Calu3 (cell line): ENCODE measurements at regions of chr3 and their contacts with region 1.

Region 1: GRCh38 chr3:88003115-88003755 is 55.6 kb downstream of the CGGBP1 start:
- DNase-seq: peak; percentile 50
- H3K4me3 Mint-ChIP-seq: no peak overlapping the region
- H3K27ac Mint-ChIP-seq: no peak overlapping the region
- H3K4me1 Mint-ChIP-seq: peaks cover 10% of the 10 kb centered on the region
- H3K27me3 Mint-ChIP-seq: no peaks in the 10 kb centered on the region
- CTCF ChIP-seq: peak; percentile 62

Region 2: DNA sequence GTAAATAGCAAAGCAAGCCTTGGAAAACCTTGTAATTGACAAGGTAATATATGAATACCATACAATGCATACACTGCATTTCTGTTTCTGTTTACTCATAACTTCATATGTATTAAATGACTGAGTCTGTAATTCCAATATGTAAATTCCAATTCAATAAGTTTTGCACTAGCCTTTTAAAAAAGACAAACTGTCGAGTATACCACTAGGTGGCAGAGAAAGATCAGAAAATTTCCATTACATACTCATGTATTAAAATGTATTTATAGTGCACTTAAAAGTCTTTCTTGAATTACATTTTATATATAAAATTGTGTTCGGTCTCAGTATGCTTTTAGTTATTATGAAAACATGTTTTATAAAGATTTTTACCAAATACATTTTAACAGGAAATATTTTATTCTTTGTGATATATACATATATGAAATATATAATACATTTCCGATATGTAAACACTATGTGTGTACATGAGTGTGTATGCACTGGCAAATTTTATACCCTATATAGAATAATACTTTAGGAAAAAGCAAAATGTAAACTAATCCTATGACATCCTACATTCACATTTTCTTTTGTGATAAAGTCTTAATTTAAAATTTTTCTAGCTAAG is 1229.0 kb before region 1 on chr3:
- CTCF ChIA-PET with region 1: no interaction called
- intact Hi-C with region 1: loop called (anchors 5 kb)
- DNase-seq: no peak
- H3K4me3 Mint-ChIP-seq: no peak overlapping the region
- H3K27ac Mint-ChIP-seq: no peak overlapping the region
- H3K4me1 Mint-ChIP-seq: no peaks in the 10 kb centered on the region
- H3K27me3 Mint-ChIP-seq: no peaks in the 10 kb centered on the region
- CTCF ChIP-seq: no peak

Region 3: DNA sequence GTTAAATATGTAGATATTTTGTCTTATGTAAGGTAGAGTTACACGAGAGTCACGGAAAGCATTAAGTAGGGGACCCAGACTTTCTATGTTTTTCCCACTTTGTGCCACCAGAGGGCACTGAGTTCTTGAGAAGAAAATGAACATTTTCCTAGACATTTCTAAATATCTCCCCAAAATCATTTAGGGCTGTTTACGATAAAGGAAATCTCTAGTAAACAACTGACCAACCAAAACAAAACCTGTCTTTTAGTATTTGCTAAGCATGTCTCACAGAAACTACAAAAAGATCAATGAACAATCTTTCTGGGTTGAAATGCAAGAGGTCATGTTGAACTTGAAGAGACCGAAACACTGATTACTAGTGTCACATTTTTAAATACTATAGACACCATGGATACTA is 743.0 kb before region 1 on chr3:
- CTCF ChIA-PET with region 1: interaction called, 5 read pairs
- intact Hi-C with region 1: loop called (anchors 1 kb)
- DNase-seq: peak; percentile 62
- H3K4me3 Mint-ChIP-seq: no peak overlapping the region
- H3K27ac Mint-ChIP-seq: no peak overlapping the region
- H3K4me1 Mint-ChIP-seq: no peaks in the 10 kb centered on the region
- H3K27me3 Mint-ChIP-seq: no peaks in the 10 kb centered on the region
- CTCF ChIP-seq: no peak

Region 4: GRCh38 chr3:87350364-87351199 is 652.7 kb before region 1 on chr3:
- CTCF ChIA-PET with region 1: interaction called, 3 read pairs
- intact Hi-C with region 1: loop called (anchors 1 kb)
- DNase-seq: no peak
- H3K4me3 Mint-ChIP-seq: no peak overlapping the region
- H3K27ac Mint-ChIP-seq: peak overlapping the region; percentile 79
- H3K4me1 Mint-ChIP-seq: peaks cover 61% of the 10 kb centered on the region
- H3K27me3 Mint-ChIP-seq: no peaks in the 10 kb centered on the region
- CTCF ChIP-seq: peak; percentile 62

Region 5: DNA sequence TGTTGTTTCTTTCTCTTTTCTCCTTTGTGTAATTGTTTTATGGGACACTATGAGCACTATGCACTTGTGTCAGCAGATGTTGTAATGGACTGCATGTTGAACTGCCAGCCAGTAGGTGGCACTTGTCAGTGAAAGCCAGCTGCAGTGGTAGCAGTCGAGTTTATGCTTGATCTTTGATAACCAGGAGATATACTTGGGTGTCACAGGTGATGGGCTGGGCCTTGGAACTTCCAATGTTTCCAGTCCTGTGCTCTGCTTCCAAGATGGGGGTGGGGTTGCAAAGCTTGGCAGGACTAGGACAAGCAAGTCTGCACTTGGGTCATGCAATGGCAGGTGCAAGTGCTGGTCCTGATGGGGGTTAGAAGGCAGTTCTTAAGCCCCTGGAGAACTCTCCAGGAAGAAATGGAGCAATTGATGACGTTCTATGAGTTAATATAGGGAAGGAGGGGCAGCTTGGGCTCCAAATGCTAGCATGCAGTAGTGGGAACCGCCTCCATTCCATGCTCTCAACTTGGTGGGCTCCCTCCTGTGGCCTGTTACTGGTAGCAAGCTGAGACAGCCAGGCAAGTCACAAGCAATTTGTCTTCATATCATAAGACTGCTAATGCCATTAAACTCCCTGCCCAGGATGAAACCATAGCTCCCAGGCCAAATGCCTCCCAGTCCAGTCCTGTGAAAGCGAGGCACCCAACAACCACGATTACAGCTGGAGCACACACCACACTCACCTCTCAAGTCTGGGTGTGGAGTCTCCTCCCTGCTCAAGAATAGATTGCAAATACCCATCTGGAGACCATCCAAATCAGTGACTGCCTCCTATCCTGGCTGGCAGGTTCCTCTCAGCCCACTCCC is 231.7 kb before region 1 on chr3:
- CTCF ChIA-PET with region 1: interaction called, 7 read pairs
- intact Hi-C with region 1: loop called (anchors 1 kb)
- DNase-seq: peak; percentile 35
- H3K4me3 Mint-ChIP-seq: no peak overlapping the region
- H3K27ac Mint-ChIP-seq: no peak overlapping the region
- H3K4me1 Mint-ChIP-seq: no peaks in the 10 kb centered on the region
- H3K27me3 Mint-ChIP-seq: no peaks in the 10 kb centered on the region
- CTCF ChIP-seq: peak; percentile 60

Region 6: DNA sequence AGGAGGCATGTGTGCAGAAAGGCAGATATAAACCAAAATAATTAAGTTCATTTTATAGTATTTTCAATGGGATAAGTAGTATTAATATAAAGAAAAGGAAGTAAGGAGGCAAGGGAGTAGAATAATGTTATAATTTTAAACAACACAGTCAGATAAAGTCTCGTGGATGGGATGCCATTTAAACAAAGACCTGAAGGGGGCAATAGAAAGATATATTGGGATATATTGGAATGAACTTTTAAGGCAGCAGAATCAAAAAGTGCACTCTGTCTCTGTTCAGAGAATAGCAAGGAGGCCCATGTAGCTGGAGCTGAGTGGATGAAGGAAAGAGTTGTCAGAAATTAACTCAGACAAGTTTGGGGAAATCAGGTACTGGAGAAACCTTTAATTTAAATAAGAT is 103.2 kb before region 1 on chr3:
- CTCF ChIA-PET with region 1: no interaction called
- intact Hi-C with region 1: loop called (anchors 1 kb)
- DNase-seq: no peak
- H3K4me3 Mint-ChIP-seq: no peak overlapping the region
- H3K27ac Mint-ChIP-seq: no peak overlapping the region
- H3K4me1 Mint-ChIP-seq: no peaks in the 10 kb centered on the region
- H3K27me3 Mint-ChIP-seq: no peaks in the 10 kb centered on the region
- CTCF ChIP-seq: no peak